HEK293T (cell line): ENCODE measurements at regions of chr1 and their contacts with region 1.

Region 1: DNA sequence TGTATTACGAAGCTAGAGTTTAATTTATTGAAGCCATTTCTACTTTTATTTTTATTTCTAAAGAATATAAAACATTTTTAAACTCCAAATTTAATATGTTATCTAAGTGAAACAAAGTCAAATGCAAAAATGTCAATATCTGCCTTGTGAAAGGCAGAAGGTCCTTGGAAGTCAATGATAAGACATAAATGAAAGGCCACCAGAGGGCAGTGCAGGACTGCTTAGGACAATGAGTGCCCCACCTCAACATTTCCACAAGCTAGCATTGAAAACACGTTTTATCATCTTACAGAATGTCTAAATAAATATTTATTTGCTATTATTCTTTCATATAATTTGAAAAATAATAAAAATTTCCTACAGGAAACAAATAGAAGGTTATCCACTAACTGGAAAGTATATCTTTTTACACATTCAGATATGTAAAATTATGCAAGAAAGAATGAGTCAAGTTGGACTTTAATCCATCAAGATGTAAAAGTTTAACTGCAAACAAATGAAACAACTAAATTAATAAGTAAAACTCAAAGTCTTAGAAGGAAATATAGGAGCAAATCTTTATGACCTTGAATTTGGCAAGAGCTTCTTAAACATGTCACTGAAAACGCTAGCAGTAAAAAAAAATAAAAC is 140.1 kb upstream of the FMN2 start:
- DNase-seq: peak; percentile 67

Region 2: GRCh38 chr1:239587066-239587465 is 364.6 kb before region 1 on chr1:
- CTCF ChIA-PET with region 1: no interaction called
- POLR2A ChIA-PET with region 1: no interaction called
- DNase-seq: no peak

Region 3: GRCh38 chr1:239841631-239842030 is 110.0 kb before region 1 on chr1:
- CTCF ChIA-PET with region 1: no interaction called
- POLR2A ChIA-PET with region 1: no interaction called
- DNase-seq: no peak

Region 4: GRCh38 chr1:239939602-239940001 is 12.0 kb before region 1 on chr1:
- CTCF ChIA-PET with region 1: interaction called, 11 read pairs
- POLR2A ChIA-PET with region 1: no interaction called
- DNase-seq: no peak

Region 5: DNA sequence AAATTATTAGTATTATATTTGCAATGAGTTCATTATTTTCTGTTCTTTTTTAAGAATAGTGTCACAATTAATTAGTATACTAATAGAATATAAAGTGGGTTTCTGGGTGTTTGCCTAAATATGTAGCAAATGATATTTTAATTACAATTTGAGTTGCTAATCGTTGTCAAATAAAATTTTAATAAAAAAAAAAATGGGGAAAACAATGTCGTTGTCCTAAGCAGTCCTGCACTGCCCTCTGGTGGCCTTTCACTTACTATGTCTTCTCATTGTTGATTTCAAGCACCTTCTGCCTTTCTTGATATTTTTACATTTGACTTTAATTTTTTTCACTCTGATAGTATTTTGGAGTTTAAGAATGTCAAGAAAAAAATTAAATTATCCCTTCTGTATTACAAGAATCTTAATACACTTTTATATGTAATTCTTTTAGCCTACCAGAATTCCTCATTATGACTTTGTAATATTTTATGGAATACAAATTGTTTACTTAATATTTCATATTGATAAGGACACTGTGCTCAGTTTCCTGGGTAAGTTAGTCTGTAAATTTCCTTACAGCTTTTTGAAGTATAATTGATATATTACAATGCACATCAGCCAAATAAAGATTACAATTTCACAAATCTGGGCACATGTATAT is 35.6 kb after region 1 on chr1:
- CTCF ChIA-PET with region 1: interaction called, 13 read pairs
- POLR2A ChIA-PET with region 1: no interaction called
- DNase-seq: no peak

Region 6: GRCh38 chr1:240004086-240004749 is 52.6 kb after region 1 on chr1:
- CTCF ChIA-PET with region 1: interaction called, 16 read pairs
- POLR2A ChIA-PET with region 1: no interaction called
- DNase-seq: peak; percentile 75

Region 7: GRCh38 chr1:240021709-240022108 is 70.1 kb after region 1 on chr1:
- CTCF ChIA-PET with region 1: no interaction called
- POLR2A ChIA-PET with region 1: no interaction called
- DNase-seq: no peak

Region 8: DNA sequence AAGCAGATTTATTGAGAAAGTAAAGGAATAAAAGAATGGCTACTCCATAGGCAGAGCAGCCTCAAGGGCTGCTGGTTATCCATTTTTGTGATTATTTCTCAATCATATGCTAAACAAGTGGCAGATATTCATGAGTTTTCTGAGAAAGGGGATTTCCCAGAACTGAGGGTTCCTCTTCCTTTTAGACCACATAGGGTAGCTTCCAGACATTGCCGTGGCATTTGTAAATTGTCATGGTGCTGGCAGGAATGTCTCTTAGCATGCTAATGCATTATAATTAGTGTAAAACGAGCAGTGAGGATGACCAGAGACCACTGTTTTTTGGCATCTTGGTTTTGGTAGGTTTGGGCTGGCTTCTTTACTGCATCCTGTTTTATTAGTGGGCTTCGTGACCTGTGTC is 123.3 kb after region 1 on chr1:
- CTCF ChIA-PET with region 1: no interaction called
- POLR2A ChIA-PET with region 1: no interaction called
- DNase-seq: no peak